Right ventricle myocardium inferior (tissue), 1 donor: ENCODE measurements at regions of chr15 and their contacts with region 1.

Region 1: DNA sequence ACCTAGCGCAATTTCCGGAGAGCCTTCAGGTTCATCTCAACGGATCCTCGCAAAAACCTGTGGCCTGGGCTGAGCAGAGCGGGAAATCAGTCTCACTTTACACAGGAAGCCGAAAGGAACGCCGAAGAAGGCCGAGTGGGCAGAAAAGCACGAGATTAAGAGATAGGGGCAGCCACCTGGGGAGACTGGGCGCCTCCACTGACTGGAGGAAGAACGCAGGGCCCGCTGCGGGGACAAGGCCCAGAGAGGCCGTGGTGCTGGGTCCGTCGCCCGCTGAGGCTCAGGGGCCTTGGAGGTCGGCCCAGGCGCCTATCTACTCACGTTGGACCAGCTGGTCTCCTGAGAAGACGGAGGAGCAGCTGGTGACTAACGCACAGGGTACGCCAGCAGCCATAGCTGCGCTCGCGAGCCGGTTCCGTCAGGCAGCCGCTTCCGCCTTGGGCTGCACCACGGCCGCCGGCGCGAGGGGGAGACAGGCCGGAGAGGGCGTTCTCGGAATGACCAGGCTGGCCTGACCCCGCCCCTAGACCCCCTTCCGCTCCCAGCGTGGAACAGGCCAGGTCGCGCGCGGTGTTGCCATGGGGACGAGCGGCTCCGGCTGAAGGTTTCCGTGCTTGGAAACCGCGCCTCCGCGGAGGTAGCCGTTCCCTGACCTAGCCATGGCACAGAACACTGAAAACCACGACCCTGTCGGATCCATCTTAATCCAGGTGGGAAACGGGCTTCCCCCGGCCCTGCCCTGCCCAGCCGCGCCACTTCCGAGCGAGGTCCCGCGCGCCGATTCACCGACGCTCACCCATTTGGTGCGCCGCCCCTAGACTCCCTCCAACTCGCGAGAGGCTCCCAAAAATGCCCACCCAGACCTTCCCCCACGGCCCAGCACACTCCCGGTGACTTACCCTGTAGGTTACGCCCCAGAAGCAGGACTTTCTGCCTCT is at the starts of genes AAGAB and IQCH:
- DNase-seq: peak; percentile 99
- ATAC-seq: peak; percentile 100
- total RNA-seq, gene AAGAB: 20.9 TPM
- total RNA-seq, gene IQCH: 0.51 TPM

Region 2: DNA sequence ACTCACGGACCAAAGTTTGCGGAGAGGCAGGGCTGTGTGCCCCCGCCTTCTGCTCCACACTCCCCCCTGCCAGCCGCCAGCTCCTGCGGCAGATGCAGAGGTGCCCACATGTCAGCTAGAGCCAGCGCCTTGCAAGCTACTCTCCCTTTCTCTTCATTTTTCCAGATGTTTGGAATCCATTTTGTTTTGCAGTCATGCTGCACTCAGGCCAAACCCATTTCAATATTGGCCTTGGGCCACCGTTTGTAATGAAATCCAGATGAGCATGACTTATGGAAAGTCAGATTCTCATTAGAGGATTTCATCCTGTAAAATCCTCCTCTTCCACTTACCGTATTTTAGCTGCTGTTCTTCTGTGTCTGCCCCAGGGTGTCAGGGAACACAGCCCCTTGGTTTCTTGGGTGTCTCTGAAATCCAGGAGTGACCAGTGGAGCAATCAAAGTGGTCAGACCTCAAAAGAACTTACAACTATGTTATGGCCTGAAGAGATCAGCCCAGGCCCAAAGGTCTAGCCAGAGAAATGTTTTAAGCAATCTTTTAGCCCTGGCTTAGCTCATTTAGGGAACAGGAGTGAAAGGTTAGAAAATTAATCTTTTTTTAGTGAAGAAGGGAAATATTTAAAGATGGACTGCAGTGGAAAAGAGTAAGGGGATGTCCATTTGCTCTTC is 65.8 kb before region 1 on chr15:
- intact Hi-C with region 1: loop called (anchors 5 kb)
- DNase-seq: no peak
- ATAC-seq: peak; percentile 4